B cell (primary cell): ENCODE measurements at regions of chr19 and their contacts with region 1.

Region 1: GRCh38 chr19:45200568-45200994 is 22.0 kb downstream of the BLOC1S3 start:
- DNase-seq: no peak
- ATAC-seq: no peak
- H3K4me3 ChIP-seq: no peak overlapping the region
- H3K4me3 Mint-ChIP-seq: no peak overlapping the region
- H3K27ac ChIP-seq: no peak overlapping the region
- H3K27ac Mint-ChIP-seq: no peak overlapping the region
- H3K4me1 ChIP-seq: no peaks in the 10 kb centered on the region
- H3K4me1 Mint-ChIP-seq: no peaks in the 10 kb centered on the region
- H3K27me3 ChIP-seq: no peaks in the 10 kb centered on the region
- H3K27me3 Mint-ChIP-seq: peaks cover 6% of the 10 kb centered on the region
- CTCF ChIP-seq: no peak

Region 2: GRCh38 chr19:44718441-44719261 is 481.9 kb before region 1 on chr19:
- CTCF ChIA-PET with region 1: no interaction called
- POLR2A ChIA-PET with region 1: no interaction called
- intact Hi-C with region 1: no loop called
- DNase-seq: no peak
- ATAC-seq: no peak
- H3K4me3 ChIP-seq: no peak overlapping the region
- H3K4me3 Mint-ChIP-seq: no peak overlapping the region
- H3K27ac ChIP-seq: no peak overlapping the region
- H3K27ac Mint-ChIP-seq: no peak overlapping the region
- H3K4me1 ChIP-seq: peaks cover 12 to 16% of the 10 kb centered on the region in 2 donors
- H3K4me1 Mint-ChIP-seq: peaks cover 16% of the 10 kb centered on the region
- H3K27me3 ChIP-seq: no peaks in the 10 kb centered on the region
- H3K27me3 Mint-ChIP-seq: no peaks in the 10 kb centered on the region
- CTCF ChIP-seq: no peak

Region 3: GRCh38 chr19:44820648-44821609 is 379.7 kb before region 1 on chr19:
- CTCF ChIA-PET with region 1: no interaction called
- POLR2A ChIA-PET with region 1: no interaction called
- intact Hi-C with region 1: loop called (anchors 10 kb)
- DNase-seq: no peak
- ATAC-seq: no peak
- H3K4me3 ChIP-seq: no peak overlapping the region
- H3K4me3 Mint-ChIP-seq: no peak overlapping the region
- H3K27ac ChIP-seq: no peak overlapping the region
- H3K27ac Mint-ChIP-seq: no peak overlapping the region
- H3K4me1 ChIP-seq: no peaks in the 10 kb centered on the region
- H3K4me1 Mint-ChIP-seq: no peaks in the 10 kb centered on the region
- H3K27me3 ChIP-seq: no peaks in the 10 kb centered on the region
- H3K27me3 Mint-ChIP-seq: peaks cover 11% of the 10 kb centered on the region
- CTCF ChIP-seq: no peak

Region 4: DNA sequence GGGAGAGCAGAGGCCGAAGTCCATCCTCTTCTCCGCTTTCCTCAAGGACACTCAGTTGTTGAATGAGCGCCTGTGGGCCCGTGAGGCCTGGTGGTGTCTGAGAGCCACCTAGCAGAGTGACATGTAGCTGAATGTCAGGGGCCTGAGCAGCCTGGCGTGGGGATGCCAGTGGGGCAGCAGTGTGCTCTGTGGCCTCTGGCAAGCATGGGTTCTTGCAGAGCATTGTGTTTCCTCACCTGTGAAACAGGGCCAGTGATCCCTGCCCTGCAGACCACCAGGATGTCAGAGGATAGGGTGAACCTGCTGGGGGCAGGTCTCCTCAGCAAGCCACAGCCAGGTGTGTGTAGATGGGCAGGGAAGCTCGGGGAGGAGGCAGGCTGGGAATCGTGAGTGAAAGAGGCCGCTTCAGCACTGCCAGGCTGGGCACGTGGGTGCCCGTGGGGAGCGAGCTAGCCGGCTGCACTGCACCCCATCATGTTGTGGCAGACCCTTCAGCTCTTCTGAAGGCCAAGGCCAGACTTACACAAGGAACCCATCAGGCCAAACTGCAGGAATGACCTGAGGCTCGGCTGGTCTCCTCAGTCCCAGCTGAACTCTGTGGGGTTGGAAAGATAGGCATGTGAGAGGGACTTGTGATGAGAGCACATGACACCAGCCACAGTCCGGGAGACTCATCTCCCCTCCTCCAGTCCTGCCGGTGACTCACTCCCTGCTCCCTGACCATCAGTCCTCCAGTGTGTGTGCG is 102.6 kb before region 1 on chr19:
- CTCF ChIA-PET with region 1: no interaction called
- POLR2A ChIA-PET with region 1: no interaction called
- intact Hi-C with region 1: no loop called
- DNase-seq: no peak
- ATAC-seq: no peak
- H3K4me3 ChIP-seq: no peak overlapping the region
- H3K4me3 Mint-ChIP-seq: no peak overlapping the region
- H3K27ac ChIP-seq: no peak overlapping the region
- H3K27ac Mint-ChIP-seq: peak overlapping the region; percentile 56
- H3K4me1 ChIP-seq: peaks cover 20 to 32% of the 10 kb centered on the region in 2 donors
- H3K4me1 Mint-ChIP-seq: peaks cover 64% of the 10 kb centered on the region
- H3K27me3 ChIP-seq: no peaks in the 10 kb centered on the region
- H3K27me3 Mint-ChIP-seq: no peaks in the 10 kb centered on the region
- CTCF ChIP-seq: no peak

Region 5: DNA sequence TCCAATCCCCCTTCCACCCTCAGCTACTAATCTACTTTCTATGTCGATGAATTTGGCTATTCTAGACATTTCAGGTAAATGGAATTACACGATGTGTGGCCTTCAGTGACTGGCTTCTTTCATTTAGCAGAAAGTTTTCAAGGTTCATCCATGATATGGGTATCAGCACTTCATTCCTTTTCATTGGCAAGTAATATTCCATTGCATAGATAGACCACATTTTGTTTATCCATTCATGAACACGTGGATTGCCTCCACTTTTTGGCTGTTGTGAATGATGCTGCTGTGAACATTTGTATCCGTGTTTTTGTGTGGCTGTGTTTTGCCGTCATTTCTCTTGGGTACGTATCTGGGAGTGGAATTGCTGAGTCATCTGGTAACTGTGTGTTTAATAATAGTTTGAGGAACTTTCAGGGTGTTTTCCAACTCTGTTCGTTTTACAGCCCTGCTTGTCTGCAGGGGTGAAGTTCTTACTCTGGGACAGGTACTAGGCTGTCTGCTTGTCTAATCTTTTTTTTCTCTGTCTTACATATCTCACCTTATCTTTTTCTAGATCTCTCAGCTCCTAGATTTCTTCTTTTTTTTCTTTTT is 83.0 kb after region 1 on chr19:
- CTCF ChIA-PET with region 1: no interaction called
- POLR2A ChIA-PET with region 1: no interaction called
- intact Hi-C with region 1: no loop called
- DNase-seq: no peak
- ATAC-seq: no peak
- H3K4me3 ChIP-seq: no peak overlapping the region
- H3K4me3 Mint-ChIP-seq: no peak overlapping the region
- H3K27ac ChIP-seq: no peak overlapping the region
- H3K27ac Mint-ChIP-seq: no peak overlapping the region
- H3K4me1 ChIP-seq: no peaks in the 10 kb centered on the region
- H3K4me1 Mint-ChIP-seq: peaks cover 4% of the 10 kb centered on the region
- H3K27me3 ChIP-seq: no peaks in the 10 kb centered on the region
- H3K27me3 Mint-ChIP-seq: no peaks in the 10 kb centered on the region
- CTCF ChIP-seq: no peak

Region 6: GRCh38 chr19:45852145-45852750 is 651.7 kb after region 1 on chr19:
- CTCF ChIA-PET with region 1: no interaction called
- POLR2A ChIA-PET with region 1: no interaction called
- intact Hi-C with region 1: no loop called
- DNase-seq: no peak
- ATAC-seq: no peak
- H3K4me3 ChIP-seq: no peak overlapping the region
- H3K4me3 Mint-ChIP-seq: no peak overlapping the region
- H3K27ac ChIP-seq: no peak overlapping the region
- H3K27ac Mint-ChIP-seq: no peak overlapping the region
- H3K4me1 ChIP-seq: no peaks in the 10 kb centered on the region
- H3K4me1 Mint-ChIP-seq: no peaks in the 10 kb centered on the region
- H3K27me3 ChIP-seq: no peaks in the 10 kb centered on the region
- H3K27me3 Mint-ChIP-seq: no peaks in the 10 kb centered on the region
- CTCF ChIP-seq: no peak